ENCODE measurements at regions of chr14 and their contacts with region 1.

Region 1: DNA sequence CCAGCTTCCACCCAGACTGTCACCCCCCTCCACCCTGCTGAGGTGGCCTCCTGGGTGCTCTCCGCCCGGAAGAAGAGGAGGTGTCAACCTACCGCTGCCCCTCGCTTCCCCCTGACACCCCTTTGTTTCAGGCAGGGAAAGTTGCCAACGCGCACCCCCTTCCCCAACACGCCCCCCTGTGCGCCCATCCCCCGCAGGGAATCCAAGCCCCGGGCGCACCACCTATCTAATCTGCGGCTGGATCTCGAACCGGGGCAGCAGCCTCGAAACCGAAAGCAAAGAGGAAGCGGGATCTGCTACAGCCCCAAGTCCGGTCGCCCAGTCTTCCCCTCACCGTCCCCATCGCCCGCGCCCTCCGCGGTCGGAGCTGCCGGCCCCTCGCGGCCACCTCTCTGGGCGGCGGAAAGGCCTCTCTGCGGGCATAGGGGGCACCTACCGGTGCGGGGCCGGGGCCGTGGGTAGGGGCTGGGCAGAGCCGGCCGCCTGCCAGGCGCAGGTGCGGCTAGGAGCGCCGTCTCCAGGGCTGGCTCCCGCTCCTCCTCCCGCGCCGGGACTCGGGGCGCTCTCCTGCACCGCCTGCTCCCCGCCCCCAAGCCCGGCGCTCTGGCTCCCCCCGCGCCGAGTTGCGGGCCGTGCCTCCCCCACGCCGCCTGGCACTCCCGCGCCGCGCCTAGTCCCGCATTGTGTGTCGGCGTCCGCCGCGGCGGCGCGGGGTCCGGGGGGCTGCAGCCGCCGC is 18.3 kb upstream of the PLEKHH1 start:
- DNase-seq: peak; percentile 33 to 56 (median 47)
- ATAC-seq: peak; percentile 76
- H3K4me3 ChIP-seq: peak overlapping the region; percentile 68
- H3K4me3 Mint-ChIP-seq: peak overlapping the region; percentile 84 to 95 (median 92)
- H3K27ac ChIP-seq: peak overlapping the region; percentile 73
- H3K27ac Mint-ChIP-seq: peak overlapping the region; percentile 56 to 93 (median 89)
- H3K4me1 ChIP-seq: peaks cover 14 to 21% of the 10 kb centered on the region in 2 donors
- H3K4me1 Mint-ChIP-seq: peaks cover 15 to 35% (median 22%) of the 10 kb centered on the region in 7 donors
- H3K27me3 ChIP-seq: no peaks in the 10 kb centered on the region
- H3K27me3 Mint-ChIP-seq: peaks cover 0 to 82% (median 0%) of the 10 kb centered on the region in 5 donors

Region 2: DNA sequence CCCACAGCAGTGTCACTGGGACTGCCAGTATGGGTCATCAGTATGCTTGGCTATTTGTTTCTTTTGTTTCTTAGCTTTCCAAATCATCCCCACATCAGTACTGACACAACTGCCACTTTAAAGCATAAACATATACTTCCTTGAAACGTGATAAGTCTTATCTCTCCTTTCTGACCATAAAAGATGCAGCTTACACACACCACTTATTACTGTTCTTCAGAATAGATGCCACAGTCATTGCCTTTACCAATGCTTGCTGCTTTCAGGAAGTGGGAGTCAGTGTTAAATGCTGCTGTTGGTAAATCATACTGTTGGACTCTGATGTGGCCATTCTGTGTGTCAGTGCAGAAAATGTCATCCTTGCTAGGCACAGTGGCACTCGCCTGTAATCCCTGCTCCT is 344.1 kb before region 1 on chr14:
- CTCF ChIA-PET with region 1: no interaction called
- POLR2A ChIA-PET with region 1: no interaction called
- intact Hi-C with region 1: no loop called
- DNase-seq: no peak
- ATAC-seq: peak; percentile 56
- H3K4me3 ChIP-seq: no peak overlapping the region
- H3K4me3 Mint-ChIP-seq: no peak overlapping the region
- H3K27ac ChIP-seq: no peak overlapping the region
- H3K27ac Mint-ChIP-seq: no peak overlapping the region
- H3K4me1 ChIP-seq: no peaks in the 10 kb centered on the region
- H3K4me1 Mint-ChIP-seq: peaks cover 0 to 5% (median 0%) of the 10 kb centered on the region in 7 donors
- H3K27me3 ChIP-seq: no peaks in the 10 kb centered on the region
- H3K27me3 Mint-ChIP-seq: no peaks in the 10 kb centered on the region

Region 3: GRCh38 chr14:67467179-67468080 is 47.4 kb before region 1 on chr14:
- CTCF ChIA-PET with region 1: no interaction called
- POLR2A ChIA-PET with region 1: interaction called, 3 read pairs
- intact Hi-C with region 1: loop called (anchors 2 to 10 kb)
- DNase-seq: peak in 3 of 9 donors; percentile 9 to 18 (median 13)
- ATAC-seq: no peak
- H3K4me3 ChIP-seq: no peak overlapping the region
- H3K4me3 Mint-ChIP-seq: peak overlapping the region in 4 of 10 donors; percentile 16 to 38 (median 22)
- H3K27ac ChIP-seq: no peak overlapping the region
- H3K27ac Mint-ChIP-seq: peak overlapping the region in 7 of 9 donors; percentile 2 to 72 (median 54)
- H3K4me1 ChIP-seq: peaks cover 9 to 21% of the 10 kb centered on the region in 2 donors
- H3K4me1 Mint-ChIP-seq: peaks cover 8 to 52% (median 40%) of the 10 kb centered on the region in 7 donors
- H3K27me3 ChIP-seq: no peaks in the 10 kb centered on the region
- H3K27me3 Mint-ChIP-seq: peaks cover 0 to 13% (median 0%) of the 10 kb centered on the region in 5 donors

Region 4: DNA sequence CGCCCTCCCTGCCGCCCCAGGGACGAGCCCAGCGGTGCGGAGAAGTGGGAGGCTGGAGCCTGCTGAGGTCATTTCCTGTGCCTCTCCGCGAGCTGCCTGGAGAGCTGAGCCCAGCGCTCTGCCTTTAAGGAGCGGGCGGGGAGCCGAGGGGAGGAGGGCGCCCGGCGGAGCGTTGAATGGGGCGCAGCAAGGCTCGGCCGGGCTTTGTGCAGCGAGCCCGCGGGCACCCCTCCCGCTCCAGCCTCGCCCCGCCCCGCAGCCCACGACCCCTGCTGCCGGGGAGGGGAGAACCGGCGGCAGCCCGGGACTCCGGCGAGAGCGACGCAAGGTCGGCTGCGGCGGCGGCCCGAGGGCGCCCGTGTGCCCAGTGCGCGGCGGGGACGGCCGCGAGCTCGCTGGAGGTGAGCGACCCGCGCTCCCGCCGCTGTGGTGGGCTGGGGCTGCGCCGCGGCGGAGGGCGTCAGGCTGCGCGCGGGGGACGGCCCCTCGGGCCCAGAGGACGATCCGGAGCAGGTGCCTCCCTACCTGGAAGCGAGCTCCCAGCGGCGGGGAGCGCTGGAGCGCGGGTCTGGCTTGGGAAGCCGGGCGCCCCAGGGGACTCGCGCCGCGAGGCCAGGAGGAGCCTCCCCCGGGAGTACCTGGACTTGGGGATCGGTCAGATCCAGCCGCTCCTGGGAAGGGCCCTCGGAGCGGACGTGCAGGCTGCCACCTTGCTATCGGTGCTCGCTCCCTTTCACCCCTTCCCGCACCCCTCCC is 18.4 kb after region 1 on chr14 and contains the start of gene PLEKHH1:
- CTCF ChIA-PET with region 1: interaction called, 5 read pairs
- POLR2A ChIA-PET with region 1: interaction called, 3 read pairs
- intact Hi-C with region 1: loop called in 1 of 2 experiments (anchors 1 kb)
- DNase-seq: peak in 8 of 9 donors; percentile 15 to 72 (median 29)
- ATAC-seq: peak; percentile 76
- H3K4me3 ChIP-seq: peak within 1 kb of the TSS; percentile 39
- H3K4me3 Mint-ChIP-seq: peak within 1 kb of the TSS; percentile 59 to 87 (median 74)
- H3K27ac ChIP-seq: no peak within 1 kb of the TSS
- H3K27ac Mint-ChIP-seq: peak within 1 kb of the TSS in 1 of 9 donors; percentile 15
- H3K4me1 ChIP-seq: no peaks in the 10 kb centered on the region
- H3K4me1 Mint-ChIP-seq: peaks cover 0 to 8% (median 4%) of the 10 kb centered on the region in 7 donors
- H3K27me3 ChIP-seq: no peaks in the 10 kb centered on the region
- H3K27me3 Mint-ChIP-seq: peaks cover 14 to 65% (median 22%) of the 10 kb centered on the region in 5 donors
- total RNA-seq, gene PLEKHH1: 0.22 to 1.4 (median 0.32) TPM